ENCODE measurements at regions of chr19 and their contacts with region 1.

Region 1: GRCh38 chr19:45405435-45406225 is 761 bp upstream of the PPP1R13L start:
- DNase-seq: peak; percentile 77
- H3K4me3 Mint-ChIP-seq: peak overlapping the region; percentile 98
- H3K27ac Mint-ChIP-seq: peak overlapping the region; percentile 90
- H3K4me1 Mint-ChIP-seq: peaks cover 53% of the 10 kb centered on the region
- H3K27me3 Mint-ChIP-seq: peaks cover 12% of the 10 kb centered on the region

Region 2: DNA sequence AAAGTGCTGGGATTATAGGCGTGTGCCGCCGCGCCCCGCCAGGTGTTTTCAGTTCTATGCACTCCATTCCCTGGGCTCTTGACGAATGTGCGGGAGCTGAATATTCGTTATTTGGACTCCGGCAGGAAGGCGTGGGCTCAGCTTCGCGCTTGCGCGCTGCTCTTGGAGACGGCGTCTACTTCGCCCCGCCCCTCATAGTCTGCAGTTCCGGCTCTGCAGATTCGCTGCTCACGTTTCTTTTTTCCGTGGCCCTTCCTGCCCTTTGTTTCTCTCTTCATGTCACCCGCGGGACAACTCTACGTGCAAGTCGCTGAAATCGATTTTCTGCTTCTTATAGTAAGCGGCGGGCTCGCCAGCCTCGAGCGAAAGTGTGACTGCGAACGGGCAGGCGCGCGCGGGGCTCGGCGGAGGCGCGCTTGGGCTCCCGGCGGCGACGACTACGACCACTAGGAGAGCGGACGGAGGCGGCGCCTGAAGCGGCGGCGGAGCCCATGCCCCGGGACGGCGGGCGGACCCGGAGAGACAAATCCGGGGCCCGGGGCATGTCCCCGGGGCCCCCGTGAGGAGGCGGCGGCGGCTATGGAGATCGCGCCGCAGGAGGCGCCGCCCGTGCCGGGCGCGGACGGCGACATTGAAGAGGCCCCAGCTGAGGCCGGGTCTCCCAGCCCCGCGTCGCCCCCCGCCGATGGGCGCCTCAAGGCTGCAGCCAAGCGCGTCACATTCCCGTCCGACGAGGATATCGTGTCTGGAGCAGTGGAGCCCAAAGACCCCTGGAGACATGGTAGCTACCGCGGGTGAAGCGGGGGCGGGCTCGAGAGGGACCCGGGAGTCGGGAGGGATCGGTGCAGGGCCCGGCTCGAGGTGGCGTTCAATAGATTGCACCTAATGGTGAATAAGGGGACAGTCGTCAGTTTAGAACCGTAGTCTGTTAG is 312.6 kb before region 1 on chr19 and contains the start of gene PPP1R37:
- intact Hi-C with region 1: loop called (anchors 5 kb)
- DNase-seq: peak; percentile 92
- H3K4me3 Mint-ChIP-seq: peak within 1 kb of the TSS; percentile 84
- H3K27ac Mint-ChIP-seq: peak within 1 kb of the TSS; percentile 97
- H3K4me1 Mint-ChIP-seq: peaks cover 46% of the 10 kb centered on the region
- H3K27me3 Mint-ChIP-seq: no peaks in the 10 kb centered on the region
- total RNA-seq, gene PPP1R37: 20.4 and 20.5 TPM in 2 replicates

Region 3: GRCh38 chr19:45423589-45424190 is 18.1 kb after region 1 on chr19 and contains the start of gene ERCC1:
- intact Hi-C with region 1: loop called (anchors 1 kb)
- DNase-seq: peak; percentile 82
- H3K4me3 Mint-ChIP-seq: peak within 1 kb of the TSS; percentile 97
- H3K27ac Mint-ChIP-seq: peak within 1 kb of the TSS; percentile 95
- H3K4me1 Mint-ChIP-seq: peaks cover 50% of the 10 kb centered on the region
- H3K27me3 Mint-ChIP-seq: peaks cover 9% of the 10 kb centered on the region
- total RNA-seq, gene ERCC1: 143 and 152 TPM in 2 replicates

Region 4: GRCh38 chr19:45485305-45486077 is 79.9 kb after region 1 on chr19:
- intact Hi-C with region 1: loop called (anchors 1 kb)
- DNase-seq: peak; percentile 96
- H3K4me3 Mint-ChIP-seq: peak overlapping the region; percentile 87
- H3K27ac Mint-ChIP-seq: peak overlapping the region; percentile 79
- H3K4me1 Mint-ChIP-seq: peaks cover 6% of the 10 kb centered on the region
- H3K27me3 Mint-ChIP-seq: peaks cover 6% of the 10 kb centered on the region

Region 5: GRCh38 chr19:45717166-45717982 is 311.7 kb after region 1 on chr19:
- intact Hi-C with region 1: loop called (anchors 1 kb)
- DNase-seq: peak; percentile 99
- H3K4me3 Mint-ChIP-seq: peak overlapping the region; percentile 96
- H3K27ac Mint-ChIP-seq: peak overlapping the region; percentile 96
- H3K4me1 Mint-ChIP-seq: peaks cover 40% of the 10 kb centered on the region
- H3K27me3 Mint-ChIP-seq: no peaks in the 10 kb centered on the region

Measured in activated T-helper 1 cell treated with anti-CD3 and anti-CD28 coated beads, Interleukin-12 subunit alpha, Interleukin-12 subunit beta, Interleukin-2, Interleukin-4 antibody, amounts not matched to agents 30 ng/mL and 10 ng/mL and 1 ng/mL, durations not matched to agents 14 hours and 24 hours and 36 hours (primary cell).